ENCODE measurements at regions of chr14 and their contacts with region 1.

Region 1: DNA sequence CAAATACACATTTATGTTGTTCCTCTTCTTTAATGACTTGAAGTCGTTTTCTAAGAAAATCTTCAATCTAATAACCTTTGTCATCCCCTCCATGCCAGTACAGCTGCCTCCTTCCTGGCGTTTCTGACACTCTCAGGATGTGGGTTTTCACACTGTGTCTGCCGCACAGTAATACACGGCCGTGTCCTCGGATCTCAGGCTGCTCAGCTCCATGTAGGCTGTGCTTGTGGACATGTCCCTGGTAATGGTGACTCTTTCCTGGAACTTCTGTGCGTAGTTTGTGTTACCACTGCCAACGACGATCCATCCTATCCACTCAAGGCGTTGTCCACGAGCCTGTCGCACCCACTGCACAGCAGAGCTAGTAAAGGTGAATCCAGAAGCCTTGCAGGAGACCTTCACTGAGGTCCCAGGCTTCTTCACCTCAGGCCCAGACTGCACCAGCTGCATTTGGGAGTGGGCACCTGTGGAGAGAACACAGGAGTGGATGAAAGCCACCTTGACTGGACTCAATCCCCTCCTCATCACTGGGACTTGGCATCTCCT is 1095.9 kb downstream of the TMEM121 start:
- H3K4me3 ChIP-seq: no peak overlapping the region
- H3K27ac ChIP-seq: no peak overlapping the region
- H3K4me1 ChIP-seq: no peaks in the 10 kb centered on the region
- CTCF ChIP-seq: no peak

Region 2: GRCh38 chr14:106599209-106599608 is 23.1 kb before region 1 on chr14:
- CTCF ChIA-PET with region 1: interaction called, 23 read pairs
- POLR2A ChIA-PET with region 1: no interaction called
- H3K4me3 ChIP-seq: no peak overlapping the region
- H3K27ac ChIP-seq: no peak overlapping the region
- H3K4me1 ChIP-seq: no peaks in the 10 kb centered on the region
- CTCF ChIP-seq: no peak

Region 3: GRCh38 chr14:106788534-106788933 is 166.3 kb after region 1 on chr14:
- CTCF ChIA-PET with region 1: no interaction called
- POLR2A ChIA-PET with region 1: no interaction called
- H3K4me3 ChIP-seq: no peak overlapping the region
- H3K27ac ChIP-seq: no peak overlapping the region
- H3K4me1 ChIP-seq: no peaks in the 10 kb centered on the region
- CTCF ChIP-seq: no peak

Measured in HEK293 (cell line).